ENCODE measurements at regions of chr14 and their contacts with region 1.

Region 1: DNA sequence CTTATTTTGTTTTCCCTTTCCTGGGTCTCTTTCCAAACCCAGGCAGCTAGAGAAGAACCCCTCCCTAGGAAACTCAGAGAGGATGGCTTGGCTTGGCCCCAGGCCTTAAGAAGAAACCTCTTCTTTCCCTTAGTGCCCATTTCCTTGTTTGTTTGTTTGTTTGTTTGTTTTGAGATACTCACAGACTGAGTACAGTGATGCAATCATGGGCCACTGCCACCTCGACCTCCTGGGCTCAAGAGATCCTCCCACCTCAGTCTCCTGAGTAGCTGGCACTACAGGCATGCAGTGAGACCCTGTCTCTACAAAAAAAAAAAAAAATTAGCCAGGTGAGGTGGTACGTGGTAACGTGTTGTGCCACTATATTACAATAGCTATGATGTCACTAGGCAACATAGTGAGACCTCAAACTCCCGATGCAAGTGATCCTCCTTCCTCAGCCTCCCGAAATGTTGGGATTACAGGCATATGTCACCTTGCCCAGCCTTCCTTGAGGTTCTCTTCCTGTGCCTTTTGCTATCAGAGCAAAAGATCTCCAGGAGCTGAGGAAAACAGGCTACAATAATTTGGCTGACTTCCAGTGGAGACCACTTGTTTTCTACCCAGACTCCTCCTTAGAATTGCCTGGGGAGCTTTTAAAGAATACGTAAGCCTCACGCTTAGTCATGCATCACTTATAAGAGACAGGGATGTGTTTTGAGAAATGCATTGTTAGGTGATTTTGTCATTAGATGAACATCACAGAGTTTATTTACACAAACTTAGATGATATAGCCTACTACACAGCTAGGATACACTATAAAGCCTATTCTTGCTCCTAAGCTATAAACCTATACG is 34.5 kb upstream of the LGALS3 start:
- DNase-seq: no peak
- ATAC-seq: no peak

Region 2: DNA sequence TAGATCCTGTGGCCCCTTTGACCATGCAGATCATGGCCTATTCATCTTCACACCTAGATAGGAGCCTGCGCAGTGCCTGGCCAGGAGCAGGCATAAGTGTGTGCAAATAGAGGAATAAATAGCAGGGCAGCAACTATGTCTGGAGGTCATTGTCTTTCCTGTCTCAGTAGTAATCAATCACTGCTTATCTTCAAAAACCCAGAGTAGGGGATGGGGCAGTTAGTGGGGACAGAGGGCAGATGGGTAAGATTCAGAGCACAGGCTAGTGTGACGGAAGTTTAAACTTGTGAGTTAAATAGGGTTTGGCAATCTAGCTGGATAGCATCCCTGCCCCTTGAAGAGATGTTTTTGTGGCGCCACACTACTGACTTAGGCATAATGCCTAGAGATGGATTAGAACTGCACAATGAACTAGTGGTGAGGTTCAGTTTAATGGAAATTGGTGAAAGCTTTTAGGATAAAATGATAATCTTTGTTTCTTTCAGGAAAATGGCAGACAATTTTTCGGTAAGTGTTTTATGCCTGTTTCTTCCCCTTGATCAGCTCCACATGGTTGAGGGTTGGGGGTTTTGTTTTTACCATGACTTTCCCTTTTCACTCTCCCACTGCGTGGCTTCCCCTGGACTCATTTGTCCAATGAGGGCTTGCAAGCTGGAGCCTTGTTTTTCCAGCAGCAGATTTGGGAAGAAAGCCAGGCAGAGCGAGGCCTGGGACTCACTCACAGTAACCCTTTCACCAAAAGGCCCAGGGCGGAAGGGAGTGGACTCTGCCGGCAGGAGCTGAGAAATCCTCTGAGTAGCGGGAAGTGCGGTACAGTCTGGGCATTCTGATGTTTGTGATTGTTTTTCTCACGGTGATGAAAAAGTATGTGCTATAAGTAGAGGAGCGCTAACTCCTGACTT is 42.6 kb after region 1 on chr14:
- intact Hi-C with region 1: loop called (anchors 2 kb)
- DNase-seq: peak; percentile 86
- ATAC-seq: peak; percentile 91

Region 3: DNA sequence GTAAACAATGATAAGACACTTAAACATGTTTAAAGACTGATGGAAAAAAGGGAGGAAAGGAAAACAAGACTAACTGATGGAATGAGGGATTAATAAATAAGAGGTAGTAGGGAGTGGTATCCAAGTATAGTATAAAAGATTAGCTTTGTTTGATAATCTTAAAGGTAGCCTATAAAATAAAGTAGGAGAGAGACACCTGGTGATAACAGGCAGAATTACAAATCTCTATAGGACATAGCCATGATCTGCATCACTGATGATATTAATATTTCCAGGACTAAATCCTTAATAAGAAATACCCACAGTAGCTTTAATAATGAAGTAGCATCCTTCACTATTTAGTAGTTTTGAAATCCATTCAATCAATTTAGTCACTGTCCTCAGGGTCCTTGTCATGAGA is 66.5 kb after region 1 on chr14:
- intact Hi-C with region 1: loop called (anchors 1 kb)
- DNase-seq: no peak
- ATAC-seq: no peak

Region 4: GRCh38 chr14:55270832-55271565 is 176.5 kb after region 1 on chr14 and contains the start of gene FBXO34:
- intact Hi-C with region 1: no loop called
- DNase-seq: peak; percentile 100
- ATAC-seq: peak; percentile 96
- total RNA-seq, gene FBXO34: 24.5 TPM